Dendritic cell treated with granulocyte-macrophage colony-stimulating factor and Interleukin-4, amounts not matched to agents 40 ng/mL and 50 ng/mL, for 4 days (primary cell): ENCODE measurements at regions of chr11 and their contacts with region 1.

Region 1: GRCh38 chr11:3412837-3413236 is 33.9 kb upstream of the ZNF195 start:
- H3K4me3 Mint-ChIP-seq: no peak overlapping the region
- H3K27ac Mint-ChIP-seq: no peak overlapping the region
- H3K4me1 Mint-ChIP-seq: peaks cover 11% of the 10 kb centered on the region
- H3K27me3 Mint-ChIP-seq: peaks cover 14% of the 10 kb centered on the region

Region 2: DNA sequence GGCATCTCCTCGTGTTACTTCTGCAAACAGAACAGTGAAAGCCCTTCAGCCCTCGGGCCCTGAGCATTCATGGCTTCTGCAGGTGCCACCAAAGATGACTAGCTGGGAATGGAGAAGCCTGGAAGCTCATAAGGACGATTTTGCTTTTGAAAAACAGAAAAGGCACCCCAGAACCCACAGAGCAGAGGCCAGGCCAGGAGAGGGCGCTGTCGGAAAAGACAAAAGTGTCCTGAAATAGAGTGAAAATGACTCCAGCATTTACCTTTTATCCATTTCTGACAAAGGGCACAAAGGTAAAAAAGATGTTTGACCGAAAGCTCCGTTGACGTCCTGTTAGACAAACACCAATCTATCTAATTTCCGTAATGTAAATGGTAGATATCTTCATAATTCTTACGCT is 71.5 kb before region 1 on chr11:
- intact Hi-C with region 1: loop called (anchors 10 kb)
- H3K4me3 Mint-ChIP-seq: no peak overlapping the region
- H3K27ac Mint-ChIP-seq: no peak overlapping the region
- H3K4me1 Mint-ChIP-seq: no peaks in the 10 kb centered on the region
- H3K27me3 Mint-ChIP-seq: peaks cover 59% of the 10 kb centered on the region

Region 3: GRCh38 chr11:3735827-3736226 is 323.0 kb after region 1 on chr11:
- intact Hi-C with region 1: no loop called
- H3K4me3 Mint-ChIP-seq: no peak overlapping the region
- H3K27ac Mint-ChIP-seq: no peak overlapping the region
- H3K4me1 Mint-ChIP-seq: peaks cover 21% of the 10 kb centered on the region
- H3K27me3 Mint-ChIP-seq: no peaks in the 10 kb centered on the region